ENCODE measurements at regions of chr12 and their contacts with region 1.

Region 1: GRCh38 chr12:111428728-111429175 is 23.0 kb downstream of the SH2B3 start:
- DNase-seq: peak; percentile 54
- H3K4me3 Mint-ChIP-seq: peak overlapping the region; percentile 84
- H3K27ac Mint-ChIP-seq: peak overlapping the region; percentile 84
- H3K4me1 Mint-ChIP-seq: peaks cover 91% of the 10 kb centered on the region
- H3K27me3 Mint-ChIP-seq: no peaks in the 10 kb centered on the region

Region 2: GRCh38 chr12:111287125-111287900 is 141.4 kb before region 1 on chr12:
- CTCF ChIA-PET with region 1: no interaction called
- intact Hi-C with region 1: no loop called
- DNase-seq: no peak
- H3K4me3 Mint-ChIP-seq: no peak overlapping the region
- H3K27ac Mint-ChIP-seq: no peak overlapping the region
- H3K4me1 Mint-ChIP-seq: no peaks in the 10 kb centered on the region
- H3K27me3 Mint-ChIP-seq: no peaks in the 10 kb centered on the region

Region 3: GRCh38 chr12:111339321-111339938 is 89.3 kb before region 1 on chr12:
- CTCF ChIA-PET with region 1: no interaction called
- intact Hi-C with region 1: no loop called
- DNase-seq: no peak
- H3K4me3 Mint-ChIP-seq: no peak overlapping the region
- H3K27ac Mint-ChIP-seq: no peak overlapping the region
- H3K4me1 Mint-ChIP-seq: no peaks in the 10 kb centered on the region
- H3K27me3 Mint-ChIP-seq: no peaks in the 10 kb centered on the region

Region 4: DNA sequence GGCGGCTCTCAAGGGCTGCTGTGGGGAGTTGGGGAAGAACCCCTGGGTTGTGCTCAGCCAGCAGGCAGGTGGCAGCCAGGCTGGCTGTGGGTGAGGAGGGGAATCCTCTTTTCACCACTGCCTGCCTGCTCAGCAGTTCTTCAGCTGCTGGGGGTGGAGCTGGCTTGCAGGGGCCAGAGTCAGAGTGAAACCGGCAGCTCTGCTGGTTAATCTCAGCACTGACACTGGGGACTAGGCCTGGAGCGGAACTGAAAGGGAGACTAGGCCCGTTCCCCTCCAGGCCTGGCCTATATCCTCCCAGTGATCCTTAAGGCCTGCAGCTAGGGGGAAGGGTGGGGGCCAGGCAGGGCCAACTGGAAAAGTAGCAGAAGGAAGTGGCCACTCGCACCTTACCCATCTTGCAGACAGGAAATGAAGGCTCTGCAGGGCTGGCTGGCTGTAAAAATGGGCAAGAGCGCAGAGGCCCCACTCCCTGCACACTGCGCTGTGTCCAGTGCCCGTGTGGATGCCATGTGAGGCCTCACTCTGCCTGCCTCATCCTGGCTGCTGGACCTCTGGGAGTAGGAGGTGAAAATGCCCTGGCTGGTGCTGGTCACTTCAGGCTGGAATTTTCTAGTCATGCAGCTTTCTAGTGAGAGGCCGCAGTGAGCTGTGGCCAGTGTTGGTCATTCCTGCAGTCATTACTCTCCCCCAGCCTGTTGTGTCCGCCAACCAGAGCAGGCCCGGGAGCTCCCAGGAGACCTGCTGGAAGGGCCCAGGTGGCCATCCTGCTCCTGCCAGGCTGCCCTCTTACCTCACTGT is 16.4 kb after region 1 on chr12:
- CTCF ChIA-PET with region 1: interaction called, 42 read pairs
- intact Hi-C with region 1: loop called (anchors 1 kb)
- DNase-seq: peak; percentile 97
- H3K4me3 Mint-ChIP-seq: no peak overlapping the region
- H3K27ac Mint-ChIP-seq: peak overlapping the region; percentile 67
- H3K4me1 Mint-ChIP-seq: peaks cover 67% of the 10 kb centered on the region
- H3K27me3 Mint-ChIP-seq: no peaks in the 10 kb centered on the region

Region 5: DNA sequence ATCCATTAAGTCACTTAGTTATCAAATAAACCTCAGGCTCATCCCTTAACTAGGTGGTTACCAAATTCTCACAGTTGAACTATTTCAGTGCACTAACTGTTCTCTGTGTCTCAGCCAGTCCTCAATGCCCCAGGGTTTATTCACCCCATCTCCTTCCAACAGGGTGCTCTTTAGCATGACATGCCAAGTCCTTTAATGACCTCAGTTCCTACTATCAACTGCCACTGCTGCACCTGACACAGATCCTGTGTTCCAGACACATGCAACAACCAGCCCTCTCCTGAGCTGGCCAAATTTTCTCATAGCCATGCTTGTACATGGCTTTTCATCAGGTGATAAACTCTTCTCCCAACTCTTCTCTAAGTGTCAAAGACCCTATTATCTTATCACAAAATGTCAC is 90.3 kb after region 1 on chr12:
- CTCF ChIA-PET with region 1: no interaction called
- intact Hi-C with region 1: no loop called
- DNase-seq: no peak
- H3K4me3 Mint-ChIP-seq: no peak overlapping the region
- H3K27ac Mint-ChIP-seq: no peak overlapping the region
- H3K4me1 Mint-ChIP-seq: no peaks in the 10 kb centered on the region
- H3K27me3 Mint-ChIP-seq: no peaks in the 10 kb centered on the region